CD8-positive, alpha-beta T cell (primary cell): ENCODE measurements at regions of chr12 and their contacts with region 1.

Region 1: GRCh38 chr12:54398995-54399793 is 14.7 kb upstream of the ZNF385A start:
- DNase-seq: peak; percentile 82 to 96 (median 88)
- ATAC-seq: peak; percentile 98
- H3K4me3 ChIP-seq: no peak overlapping the region
- H3K4me3 Mint-ChIP-seq: no peak overlapping the region
- H3K27ac ChIP-seq: no peak overlapping the region
- H3K27ac Mint-ChIP-seq: peak overlapping the region; percentile 21
- H3K4me1 ChIP-seq: peaks cover 3% of the 10 kb centered on the region
- H3K4me1 Mint-ChIP-seq: peaks cover 8% of the 10 kb centered on the region
- H3K27me3 ChIP-seq: no peaks in the 10 kb centered on the region
- H3K27me3 Mint-ChIP-seq: no peaks in the 10 kb centered on the region
- CTCF ChIP-seq: peak; percentile 95

Region 2: GRCh38 chr12:54005853-54006686 is 393.1 kb before region 1 on chr12:
- CTCF ChIA-PET with region 1: no interaction called
- POLR2A ChIA-PET with region 1: no interaction called
- intact Hi-C with region 1: no loop called
- DNase-seq: peak; percentile 71 to 92 (median 86)
- ATAC-seq: peak; percentile 80
- H3K4me3 ChIP-seq: peak overlapping the region; percentile 24 to 62
- H3K4me3 Mint-ChIP-seq: peak overlapping the region; percentile 82
- H3K27ac ChIP-seq: no peak overlapping the region
- H3K27ac Mint-ChIP-seq: no peak overlapping the region
- H3K4me1 ChIP-seq: peaks cover 22% of the 10 kb centered on the region
- H3K4me1 Mint-ChIP-seq: peaks cover 25% of the 10 kb centered on the region
- H3K27me3 ChIP-seq: peaks cover 72 to 85% of the 10 kb centered on the region in 2 experiments
- H3K27me3 Mint-ChIP-seq: peaks cover 87% of the 10 kb centered on the region
- CTCF ChIP-seq: peak; percentile 93

Region 3: DNA sequence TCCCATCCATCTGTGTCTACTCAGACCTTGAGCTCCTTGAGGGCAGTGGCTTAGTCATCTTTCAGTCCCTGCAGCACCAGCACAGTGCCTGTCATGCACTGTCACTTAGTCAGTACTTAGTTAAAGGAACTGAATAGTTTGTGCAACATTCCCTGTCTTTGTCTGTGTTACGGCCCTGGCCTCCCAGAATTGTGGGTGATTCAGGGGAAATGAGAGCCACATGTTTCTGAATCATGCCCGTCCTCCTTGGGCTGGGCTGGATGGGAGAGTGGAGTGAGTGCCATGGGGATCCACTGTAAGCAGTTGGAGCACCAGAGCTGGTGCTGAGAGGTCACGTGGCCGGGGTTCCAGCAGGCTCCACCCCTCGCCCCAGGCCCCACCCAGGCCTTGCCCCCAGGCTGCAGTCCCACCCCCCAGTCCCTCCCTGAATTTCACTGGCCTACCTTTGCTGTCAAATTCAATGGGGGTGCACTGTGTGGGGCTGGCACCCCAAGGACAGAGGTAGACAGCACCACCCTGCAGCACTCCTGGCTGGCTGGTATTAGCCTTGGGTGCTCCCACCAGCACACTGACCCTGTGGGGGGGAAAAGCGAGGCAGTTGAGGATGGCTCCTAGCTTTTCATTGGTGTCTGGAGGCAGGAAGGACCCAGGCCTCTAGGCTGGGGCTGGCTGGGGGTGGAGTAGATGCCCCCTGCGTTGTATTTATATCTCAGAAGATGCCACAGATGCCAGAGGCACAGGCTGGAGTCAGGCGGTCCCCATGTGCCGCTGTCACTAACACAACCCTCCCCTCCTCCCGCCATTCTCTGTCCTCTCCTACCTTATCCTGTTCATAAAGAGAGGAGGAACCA is 12.4 kb after region 1 on chr12:
- CTCF ChIA-PET with region 1: interaction called, 325 read pairs
- POLR2A ChIA-PET with region 1: interaction called, 21 read pairs
- intact Hi-C with region 1: loop called in 1 of 2 experiments (anchors 1 kb)
- DNase-seq: peak in 7 of 9 experiments; percentile 36 to 74 (median 65)
- ATAC-seq: peak; percentile 39
- H3K4me3 ChIP-seq: peak overlapping the region in 1 of 2 experiments; percentile 82
- H3K4me3 Mint-ChIP-seq: peak overlapping the region; percentile 76
- H3K27ac ChIP-seq: peak overlapping the region; percentile 92 to 98
- H3K27ac Mint-ChIP-seq: peak overlapping the region; percentile 97
- H3K4me1 ChIP-seq: peaks cover 61% of the 10 kb centered on the region
- H3K4me1 Mint-ChIP-seq: peaks cover 72% of the 10 kb centered on the region
- H3K27me3 ChIP-seq: no peaks in the 10 kb centered on the region
- H3K27me3 Mint-ChIP-seq: no peaks in the 10 kb centered on the region
- CTCF ChIP-seq: no peak

Region 4: DNA sequence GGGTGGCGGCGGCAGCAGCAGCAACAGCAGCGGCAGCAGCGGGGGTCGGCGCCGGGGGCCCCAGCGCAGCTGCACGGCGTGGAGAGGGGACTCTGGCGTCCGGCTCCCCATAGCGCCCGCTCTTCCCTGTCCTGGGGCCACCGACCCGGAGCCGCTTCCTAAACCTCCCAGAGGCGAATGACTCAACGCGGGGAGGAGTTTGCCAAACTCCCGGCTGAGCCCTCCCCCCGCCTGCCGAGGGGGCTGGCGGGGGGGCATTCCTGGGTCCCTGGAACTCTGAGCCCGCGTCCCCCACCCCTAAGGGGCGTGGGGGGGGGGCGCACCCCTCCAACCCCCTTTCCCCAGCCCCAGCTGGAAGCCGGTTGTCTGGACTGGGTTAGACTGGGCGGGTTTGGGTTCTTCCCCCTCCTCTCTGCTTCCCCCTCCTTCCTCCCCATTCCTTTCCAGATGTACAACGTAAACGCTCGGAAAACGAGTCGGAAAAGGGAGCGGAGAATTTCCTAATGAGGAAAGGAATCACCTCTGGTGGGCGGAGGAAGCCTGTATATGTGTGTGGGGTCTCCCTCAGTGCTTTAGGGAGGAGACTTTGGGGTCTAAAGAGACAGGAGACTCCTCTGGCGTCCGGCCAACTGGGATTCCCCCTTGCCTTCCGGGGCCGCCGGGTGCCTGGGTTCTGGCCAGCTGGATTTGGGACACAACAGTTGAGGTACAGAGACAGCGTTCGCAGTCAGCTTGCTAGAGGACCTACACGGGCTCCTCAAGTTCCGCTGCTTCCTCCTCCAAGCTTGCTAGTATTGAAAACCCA is 20.1 kb after region 1 on chr12 and contains the start of gene ITGA5:
- CTCF ChIA-PET with region 1: interaction called, 1,006 read pairs
- POLR2A ChIA-PET with region 1: interaction called, 11 read pairs
- intact Hi-C with region 1: no loop called
- DNase-seq: peak in 5 of 9 experiments; percentile 27 to 76 (median 63)
- ATAC-seq: peak; percentile 33
- H3K4me3 ChIP-seq: peak within 1 kb of the TSS; percentile 92
- H3K4me3 Mint-ChIP-seq: peak within 1 kb of the TSS; percentile 94
- H3K27ac ChIP-seq: peak within 1 kb of the TSS; percentile 71 to 84
- H3K27ac Mint-ChIP-seq: peak within 1 kb of the TSS; percentile 97
- H3K4me1 ChIP-seq: peaks cover 52% of the 10 kb centered on the region
- H3K4me1 Mint-ChIP-seq: peaks cover 53% of the 10 kb centered on the region
- H3K27me3 ChIP-seq: no peaks in the 10 kb centered on the region
- H3K27me3 Mint-ChIP-seq: no peaks in the 10 kb centered on the region
- CTCF ChIP-seq: no peak
- total RNA-seq, gene ITGA5: 115 to 125 TPM

Region 5: DNA sequence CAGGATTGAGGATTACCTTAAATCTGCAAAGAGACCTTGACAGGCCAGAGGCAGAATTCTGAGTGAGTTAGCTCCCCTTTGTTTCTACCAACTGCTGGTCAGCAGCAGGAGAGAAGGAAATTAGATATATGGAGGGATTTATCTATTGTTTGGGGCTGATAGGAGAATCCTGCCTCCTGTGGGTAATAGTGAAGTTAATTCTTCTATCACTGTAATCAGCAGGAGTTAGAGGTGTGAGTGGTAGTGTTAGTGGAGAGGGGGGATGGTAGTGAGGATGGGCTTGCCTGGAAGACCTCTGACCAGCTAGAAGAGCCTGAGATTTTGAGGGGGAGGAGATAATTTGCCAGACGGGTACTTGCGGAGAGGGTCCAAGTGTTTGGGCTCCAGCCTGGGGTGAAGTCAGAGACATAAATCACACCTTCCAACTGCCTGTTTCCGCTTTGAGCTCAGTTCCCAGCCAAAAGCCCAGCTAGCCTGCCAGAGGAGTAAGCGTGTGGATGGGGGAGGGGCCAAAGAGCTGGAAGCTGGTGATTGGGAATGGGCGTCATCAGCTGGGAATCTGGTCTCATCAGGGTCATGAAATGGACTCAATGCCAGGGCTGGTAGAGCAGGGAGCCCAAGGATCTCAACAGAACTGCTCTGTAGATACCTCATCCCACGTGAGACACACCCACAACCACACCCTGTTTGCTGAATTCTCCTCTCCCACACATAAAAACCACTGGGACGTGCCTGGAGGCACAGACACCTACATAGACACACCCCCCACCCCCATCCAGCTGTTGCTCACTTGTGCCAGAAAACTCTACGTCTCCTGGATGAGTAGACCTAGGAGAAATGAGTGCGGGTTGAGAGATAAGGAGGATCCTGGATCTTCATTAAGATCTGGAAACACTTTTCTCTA is 33.0 kb after region 1 on chr12:
- CTCF ChIA-PET with region 1: interaction called, 1,006 read pairs
- POLR2A ChIA-PET with region 1: interaction called, 23 read pairs
- intact Hi-C with region 1: no loop called
- DNase-seq: peak in 1 of 9 experiments; percentile 21
- ATAC-seq: no peak
- H3K4me3 ChIP-seq: no peak overlapping the region
- H3K4me3 Mint-ChIP-seq: no peak overlapping the region
- H3K27ac ChIP-seq: no peak overlapping the region
- H3K27ac Mint-ChIP-seq: no peak overlapping the region
- H3K4me1 ChIP-seq: peaks cover 14% of the 10 kb centered on the region
- H3K4me1 Mint-ChIP-seq: peaks cover 44% of the 10 kb centered on the region
- H3K27me3 ChIP-seq: no peaks in the 10 kb centered on the region
- H3K27me3 Mint-ChIP-seq: no peaks in the 10 kb centered on the region
- CTCF ChIP-seq: no peak

Region 6: DNA sequence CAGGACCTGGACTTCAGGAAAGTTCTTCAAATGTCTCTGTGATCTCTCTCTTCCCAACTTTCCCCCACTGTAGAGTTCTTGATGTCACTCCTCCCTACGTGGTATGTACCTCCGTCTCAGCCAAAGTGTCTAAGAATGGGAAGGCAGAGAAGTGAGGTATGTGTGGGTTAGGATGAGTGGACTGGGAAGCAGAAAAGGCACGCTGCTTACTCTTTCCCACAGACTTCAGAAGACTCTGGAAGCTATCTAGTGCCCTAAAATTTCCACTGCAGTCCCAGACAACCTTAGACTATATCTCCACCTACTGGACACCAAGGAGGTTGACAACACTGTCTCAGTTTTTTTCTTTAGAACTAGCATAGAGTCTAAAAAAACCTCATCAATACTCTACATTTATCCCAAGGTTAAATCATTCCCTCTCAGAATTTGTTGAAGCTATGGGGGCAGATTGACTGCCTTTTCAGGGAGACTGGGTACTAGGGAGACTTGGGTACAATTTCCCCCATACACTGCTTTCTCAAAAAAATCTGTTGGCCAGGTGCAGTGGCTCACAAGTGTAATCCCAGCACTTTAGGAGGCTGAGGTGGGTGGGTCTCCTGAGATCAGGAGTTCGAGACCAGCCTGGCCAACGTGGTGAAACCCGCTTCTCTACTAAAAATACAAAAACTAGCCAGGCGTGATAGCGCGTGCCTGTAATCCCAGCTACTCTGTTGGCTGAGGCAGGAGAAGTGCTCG is 40.5 kb after region 1 on chr12:
- CTCF ChIA-PET with region 1: interaction called, 1,006 read pairs
- POLR2A ChIA-PET with region 1: interaction called, 23 read pairs
- intact Hi-C with region 1: loop called (anchors 1 kb)
- DNase-seq: peak in 2 of 9 experiments; percentile 65 to 76
- ATAC-seq: peak; percentile 90
- H3K4me3 ChIP-seq: no peak overlapping the region
- H3K4me3 Mint-ChIP-seq: no peak overlapping the region
- H3K27ac ChIP-seq: no peak overlapping the region
- H3K27ac Mint-ChIP-seq: no peak overlapping the region
- H3K4me1 ChIP-seq: no peaks in the 10 kb centered on the region
- H3K4me1 Mint-ChIP-seq: peaks cover 9% of the 10 kb centered on the region
- H3K27me3 ChIP-seq: peaks cover 0 to 3% of the 10 kb centered on the region in 2 experiments
- H3K27me3 Mint-ChIP-seq: peaks cover 2% of the 10 kb centered on the region
- CTCF ChIP-seq: peak; percentile 82

Region 7: GRCh38 chr12:54497883-54498282 is 98.7 kb after region 1 on chr12:
- CTCF ChIA-PET with region 1: interaction called, 17 read pairs
- POLR2A ChIA-PET with region 1: interaction called, 3 read pairs
- intact Hi-C with region 1: loop called (anchors 1 to 2 kb)
- DNase-seq: no peak
- ATAC-seq: no peak
- H3K4me3 ChIP-seq: peak overlapping the region; percentile 86 to 88
- H3K4me3 Mint-ChIP-seq: peak overlapping the region; percentile 99
- H3K27ac ChIP-seq: peak overlapping the region; percentile 57 to 79
- H3K27ac Mint-ChIP-seq: peak overlapping the region; percentile 98
- H3K4me1 ChIP-seq: peaks cover 36% of the 10 kb centered on the region
- H3K4me1 Mint-ChIP-seq: peaks cover 43% of the 10 kb centered on the region
- H3K27me3 ChIP-seq: no peaks in the 10 kb centered on the region
- H3K27me3 Mint-ChIP-seq: no peaks in the 10 kb centered on the region
- CTCF ChIP-seq: no peak

Region 8: GRCh38 chr12:54504550-54504949 is 105.4 kb after region 1 on chr12:
- CTCF ChIA-PET with region 1: interaction called, 10 read pairs
- POLR2A ChIA-PET with region 1: no interaction called
- intact Hi-C with region 1: no loop called
- DNase-seq: no peak
- ATAC-seq: no peak
- H3K4me3 ChIP-seq: no peak overlapping the region
- H3K4me3 Mint-ChIP-seq: no peak overlapping the region
- H3K27ac ChIP-seq: no peak overlapping the region
- H3K27ac Mint-ChIP-seq: no peak overlapping the region
- H3K4me1 ChIP-seq: peaks cover 32% of the 10 kb centered on the region
- H3K4me1 Mint-ChIP-seq: peaks cover 55% of the 10 kb centered on the region
- H3K27me3 ChIP-seq: no peaks in the 10 kb centered on the region
- H3K27me3 Mint-ChIP-seq: no peaks in the 10 kb centered on the region
- CTCF ChIP-seq: no peak